HEK293T (cell line): ENCODE measurements at regions of chr6 and their contacts with region 1.

Region 1: GRCh38 chr6:100464903-100465700 is at the start of gene SIM1:
- DNase-seq: peak; percentile 83

Region 2: DNA sequence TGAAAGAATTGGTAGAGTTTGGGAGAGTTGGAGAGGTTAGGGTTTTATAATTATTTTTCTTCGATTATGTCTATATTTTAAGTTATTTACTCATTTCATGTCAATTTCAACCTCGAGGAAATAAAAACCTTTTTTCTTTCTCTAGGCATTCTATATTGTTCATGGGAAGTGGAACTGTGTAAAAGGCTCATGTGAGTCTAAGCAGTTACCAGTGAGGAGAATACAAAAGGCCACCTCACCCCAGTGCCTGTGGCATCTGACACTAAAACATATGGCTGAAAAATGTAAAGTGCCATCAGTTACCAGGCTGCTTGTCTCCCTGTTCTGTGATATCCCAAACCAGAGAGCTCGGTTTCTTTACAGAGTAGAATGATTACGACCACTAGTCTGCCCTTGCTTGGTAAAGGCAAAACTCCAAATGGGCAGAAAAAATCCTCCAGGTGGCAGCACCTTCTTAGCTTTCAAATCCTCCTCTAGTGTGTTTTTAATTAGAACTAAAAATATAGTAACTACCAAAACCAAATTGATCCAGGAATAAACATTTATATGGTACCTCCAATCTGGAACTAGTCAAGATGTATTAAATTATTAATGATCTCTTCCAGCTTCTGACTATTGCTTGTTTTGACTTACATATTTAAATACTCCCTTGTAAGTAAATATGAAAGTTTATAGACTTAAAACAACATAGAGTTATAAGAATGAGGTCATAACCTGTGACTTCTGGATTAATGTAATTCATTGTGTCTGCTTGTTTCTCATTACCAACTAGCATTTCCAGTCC is 348.5 kb before region 1 on chr6:
- CTCF ChIA-PET with region 1: interaction called, 15 read pairs
- POLR2A ChIA-PET with region 1: interaction called, 3 read pairs
- DNase-seq: peak; percentile 52

Region 3: DNA sequence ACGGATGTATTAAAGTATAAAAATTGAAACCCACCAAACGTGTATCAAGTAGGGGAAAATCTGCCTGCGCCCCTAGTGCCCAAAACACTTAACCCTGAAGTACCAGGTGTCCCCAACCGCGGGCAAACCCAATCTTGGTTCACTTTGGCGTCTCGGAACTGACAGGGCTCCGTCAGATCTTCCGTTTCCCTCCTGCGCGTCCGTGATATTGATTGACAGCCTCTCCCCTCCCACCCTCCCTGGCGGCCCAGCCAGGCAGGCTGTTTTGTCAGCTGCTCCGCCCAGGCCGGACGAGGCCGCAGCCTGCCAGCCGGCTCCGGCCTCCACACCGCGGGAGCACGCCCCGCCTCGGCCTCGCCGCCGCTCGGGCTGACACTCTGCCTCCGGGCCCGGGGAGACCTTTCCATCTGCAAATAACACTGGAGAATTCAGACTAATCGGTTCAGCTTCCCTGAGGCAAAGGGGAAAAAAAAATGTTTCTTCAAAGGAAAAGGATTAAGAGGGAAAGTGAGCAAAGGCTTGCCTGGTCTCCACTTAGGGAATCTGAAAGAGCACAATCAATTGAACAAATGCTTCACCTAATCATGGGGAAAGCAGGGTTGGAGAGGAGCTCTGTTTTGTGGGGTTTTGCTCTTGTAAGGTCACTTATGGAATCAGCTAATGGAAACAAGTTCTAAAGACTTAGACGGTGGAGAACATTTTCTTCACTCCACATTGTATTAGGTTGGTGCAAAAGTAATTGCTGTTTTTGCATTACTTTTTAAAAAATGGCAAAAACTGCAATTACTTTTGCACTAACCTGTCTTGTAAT is 236.1 kb before region 1 on chr6:
- CTCF ChIA-PET with region 1: interaction called, 6 read pairs
- POLR2A ChIA-PET with region 1: interaction called, 10 read pairs
- DNase-seq: peak; percentile 76